ENCODE measurements at regions of chr3 and their contacts with region 1.

Region 1: DNA sequence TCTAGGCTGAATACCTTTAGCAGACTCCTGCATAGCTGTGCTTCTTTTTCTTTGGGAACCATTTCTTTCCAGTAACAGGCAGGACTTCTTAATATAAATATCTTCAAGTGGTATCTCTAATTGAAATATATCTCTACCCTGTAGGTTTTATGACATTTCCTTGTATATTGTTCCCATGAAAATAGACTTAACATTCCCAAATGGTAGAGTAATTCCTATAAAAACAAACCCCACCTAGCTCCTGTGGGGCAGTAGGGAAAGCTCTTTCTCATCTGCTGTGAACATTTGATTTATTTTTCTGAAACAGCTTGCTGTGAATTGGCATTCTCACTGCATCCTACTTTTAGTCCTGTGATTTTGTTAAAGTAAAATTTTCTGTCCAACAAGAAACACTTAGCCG is 20.8 kb downstream of the SELENOT start:
- DNase-seq: no peak
- ATAC-seq: no peak
- H3K4me3 ChIP-seq: no peak overlapping the region
- H3K27ac ChIP-seq: no peak overlapping the region
- H3K4me1 ChIP-seq: peaks cover 14% of the 10 kb centered on the region
- H3K27me3 ChIP-seq: no peaks in the 10 kb centered on the region
- CTCF ChIP-seq: no peak
- EP300 ChIP-seq: no peak
- POLR2A ChIP-seq: no peak
- RAD21 ChIP-seq: no peak

Region 2: GRCh38 chr3:150449169-150449721 is 174.7 kb before region 1 on chr3:
- CTCF ChIA-PET with region 1: no interaction called
- POLR2A ChIA-PET with region 1: no interaction called
- in situ Hi-C with region 1: no loop called
- intact Hi-C with region 1: no loop called
- DNase-seq: no peak
- ATAC-seq: no peak
- H3K4me3 ChIP-seq: no peak overlapping the region
- H3K27ac ChIP-seq: no peak overlapping the region
- H3K4me1 ChIP-seq: peaks cover 4% of the 10 kb centered on the region; the same call in 1 of the 2 replicates
- H3K27me3 ChIP-seq: no peaks in the 10 kb centered on the region
- CTCF ChIP-seq: no peak
- EP300 ChIP-seq: no peak
- POLR2A ChIP-seq: no peak
- RAD21 ChIP-seq: no peak

Region 3: DNA sequence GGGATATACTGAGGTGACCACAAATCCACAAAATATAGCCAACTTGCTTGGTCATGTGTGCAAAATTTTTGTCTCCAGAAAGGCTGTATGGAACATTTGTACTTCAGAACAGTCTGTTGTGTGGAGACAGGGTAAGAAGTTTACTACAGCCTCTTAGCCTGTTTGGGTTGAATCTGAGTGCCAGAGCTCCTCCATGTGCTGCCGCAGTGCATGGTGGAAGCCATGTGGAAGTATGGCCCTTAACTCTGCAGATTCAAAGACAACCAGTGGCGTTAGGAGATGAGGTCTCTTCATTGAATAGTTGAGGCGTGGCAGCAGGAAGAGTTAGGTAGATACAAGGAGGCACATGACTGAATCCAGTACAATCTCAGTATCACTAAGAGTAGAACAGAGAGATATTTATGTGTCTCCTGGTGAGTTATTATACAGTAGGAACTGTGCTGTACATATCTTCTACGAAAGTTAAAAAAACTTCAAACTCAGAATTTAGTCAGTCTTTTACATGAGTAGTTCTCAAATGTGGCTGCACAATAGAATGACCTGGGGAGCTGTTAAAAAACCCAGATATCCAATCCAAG is 68.0 kb before region 1 on chr3:
- CTCF ChIA-PET with region 1: no interaction called
- POLR2A ChIA-PET with region 1: no interaction called
- in situ Hi-C with region 1: no loop called
- intact Hi-C with region 1: no loop called
- DNase-seq: no peak
- ATAC-seq: no peak
- H3K4me3 ChIP-seq: no peak overlapping the region
- H3K27ac ChIP-seq: no peak overlapping the region
- H3K4me1 ChIP-seq: peaks cover 3% of the 10 kb centered on the region; the same call in 1 of the 2 replicates
- H3K27me3 ChIP-seq: no peaks in the 10 kb centered on the region
- CTCF ChIP-seq: no peak
- EP300 ChIP-seq: no peak
- POLR2A ChIP-seq: no peak
- RAD21 ChIP-seq: no peak

Region 4: DNA sequence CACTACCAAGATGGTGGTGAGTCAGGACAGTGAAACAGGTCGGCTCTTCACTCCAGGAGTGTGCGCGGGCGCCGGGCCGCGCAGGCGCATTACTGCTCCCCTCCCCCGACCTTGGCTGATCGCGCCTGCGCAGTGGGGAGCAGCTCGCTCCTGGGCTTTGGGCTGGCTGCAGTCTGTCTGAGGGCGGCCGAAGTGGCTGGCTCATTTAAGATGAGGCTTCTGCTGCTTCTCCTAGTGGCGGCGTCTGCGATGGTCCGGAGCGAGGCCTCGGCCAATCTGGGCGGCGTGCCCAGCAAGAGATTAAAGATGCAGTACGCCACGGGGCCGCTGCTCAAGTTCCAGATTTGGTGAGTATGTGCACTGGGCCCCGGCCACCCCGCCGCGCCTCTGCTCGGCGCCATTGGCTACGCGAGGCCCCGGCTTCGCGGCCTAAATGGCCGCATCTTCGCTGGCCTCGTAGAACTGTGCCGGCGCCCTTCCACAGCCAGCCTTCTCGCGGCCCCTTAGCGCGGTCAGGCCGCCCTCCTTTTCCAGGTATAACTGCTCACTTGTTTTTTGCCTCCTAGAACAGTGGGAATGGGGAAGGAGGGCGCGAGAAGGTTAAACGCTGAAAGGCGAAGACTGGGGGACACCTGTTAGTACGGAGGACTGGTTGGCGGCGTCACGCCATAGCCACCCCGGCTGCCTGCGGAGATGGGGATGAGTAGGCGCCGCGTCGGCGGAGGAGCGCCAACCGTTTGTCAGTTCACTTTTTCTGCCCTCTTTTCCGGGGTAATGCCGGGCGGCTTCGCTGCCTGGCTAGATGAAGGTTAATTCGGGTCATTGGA is 20.6 kb before region 1 on chr3 and contains the start of gene SELENOT:
- CTCF ChIA-PET with region 1: no interaction called
- POLR2A ChIA-PET with region 1: no interaction called
- in situ Hi-C with region 1: no loop called
- intact Hi-C with region 1: loop called (anchors 2 kb)
- DNase-seq: peak; percentile 92
- ATAC-seq: peak; percentile 95
- H3K4me3 ChIP-seq: peak within 1 kb of the TSS; percentile 86 to 89 (median 86)
- H3K27ac ChIP-seq: peak within 1 kb of the TSS; percentile 91
- H3K4me1 ChIP-seq: peaks cover 58% of the 10 kb centered on the region
- H3K27me3 ChIP-seq: no peaks in the 10 kb centered on the region
- CTCF ChIP-seq: peak; percentile 29
- EP300 ChIP-seq: no peak
- POLR2A ChIP-seq: peak; percentile 95
- RAD21 ChIP-seq: 0 out of 2 replicates have a peak, but pooled peaks have one; percentile 35
- total RNA-seq, gene SELENOT: 106 and 122 TPM in 2 replicates

Region 5: GRCh38 chr3:150875548-150875947 is 251.6 kb after region 1 on chr3:
- CTCF ChIA-PET with region 1: no interaction called
- POLR2A ChIA-PET with region 1: no interaction called
- in situ Hi-C with region 1: no loop called
- intact Hi-C with region 1: no loop called
- DNase-seq: no peak
- ATAC-seq: no peak
- H3K4me3 ChIP-seq: no peak overlapping the region
- H3K27ac ChIP-seq: no peak overlapping the region
- H3K4me1 ChIP-seq: no peaks in the 10 kb centered on the region
- H3K27me3 ChIP-seq: peaks cover 0 to 8% of the 10 kb centered on the region in 2 experiments; a peak in 1 of 5 replicates
- CTCF ChIP-seq: no peak
- EP300 ChIP-seq: no peak
- POLR2A ChIP-seq: no peak
- RAD21 ChIP-seq: no peak